Activated CD4-positive, alpha-beta T cell treated with anti-CD3 and anti-CD28 coated beads, Interleukin-2, amount 10 ng/mL, durations not matched to agents 24 days and 14 days (primary cell): ENCODE measurements at regions of chr2 and their contacts with region 1.

Region 1: GRCh38 chr2:48313036-48313877 is 216.7 kb upstream of the STON1 start:
- DNase-seq: peak; percentile 70
- H3K4me3 Mint-ChIP-seq: peak overlapping the region; percentile 92
- H3K27ac Mint-ChIP-seq: peak overlapping the region; percentile 99
- H3K4me1 Mint-ChIP-seq: peaks cover 24% of the 10 kb centered on the region
- H3K27me3 Mint-ChIP-seq: no peaks in the 10 kb centered on the region

Region 2: DNA sequence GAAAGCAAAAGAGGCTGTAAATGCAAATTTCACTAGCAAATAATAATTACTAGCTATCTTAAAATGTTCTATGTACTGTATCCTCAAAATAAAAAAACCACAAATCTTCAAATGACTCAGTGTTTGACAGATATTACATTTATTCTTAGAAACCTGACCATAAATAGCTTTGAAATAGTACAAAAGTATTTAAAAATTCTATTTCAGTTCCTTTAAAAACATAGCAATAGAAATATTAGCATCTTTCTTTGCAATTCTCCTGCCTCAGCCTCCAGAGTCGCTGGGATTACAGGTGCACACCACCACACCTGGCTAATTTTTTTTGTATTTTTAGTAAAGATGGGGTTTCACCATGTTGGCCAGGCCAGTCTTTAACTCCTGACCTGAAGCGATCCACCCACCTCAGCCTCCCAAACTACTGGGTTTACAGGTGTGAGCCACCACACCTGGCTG is 479.7 kb before region 1 on chr2:
- intact Hi-C with region 1: no loop called
- DNase-seq: no peak
- H3K4me3 Mint-ChIP-seq: no peak overlapping the region
- H3K27ac Mint-ChIP-seq: no peak overlapping the region
- H3K4me1 Mint-ChIP-seq: peaks cover 3% of the 10 kb centered on the region
- H3K27me3 Mint-ChIP-seq: no peaks in the 10 kb centered on the region

Region 3: DNA sequence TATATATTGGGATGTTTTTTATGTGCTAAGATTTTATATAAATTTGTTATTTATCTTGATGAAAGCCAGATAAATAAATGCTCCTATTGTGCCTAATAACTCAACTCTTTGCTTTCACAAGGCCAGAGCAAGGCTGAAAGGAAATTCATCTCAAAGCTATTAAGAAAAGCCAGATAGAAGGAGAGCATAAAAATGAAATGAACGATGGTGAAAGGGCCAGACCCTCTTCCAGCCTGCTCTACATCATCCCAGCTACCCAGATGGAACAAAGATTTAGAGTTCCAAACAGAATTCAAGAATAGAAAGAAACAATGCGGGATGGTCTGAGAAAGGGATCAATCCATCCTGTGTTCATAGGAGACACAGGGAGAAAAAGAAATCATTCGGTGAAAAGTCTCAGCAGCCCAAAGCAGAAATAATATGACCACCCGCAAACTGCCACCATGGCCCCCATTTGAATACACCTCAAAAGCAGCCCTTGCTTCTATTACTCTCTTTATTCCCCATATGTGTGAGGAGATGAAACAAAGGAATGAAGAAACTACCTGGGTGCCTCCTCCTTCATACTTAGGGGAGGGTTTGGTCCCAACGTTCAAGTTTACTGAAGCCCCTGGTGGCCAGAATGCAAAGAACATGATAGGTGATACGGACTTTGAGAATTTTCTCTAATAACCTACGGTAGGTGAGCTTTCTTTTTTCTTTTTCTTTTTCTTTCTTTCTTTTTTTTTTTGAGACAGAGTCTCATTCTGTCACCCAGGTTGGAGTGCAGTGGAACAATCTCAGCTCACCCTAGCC is 296.8 kb before region 1 on chr2:
- intact Hi-C with region 1: no loop called
- DNase-seq: no peak
- H3K4me3 Mint-ChIP-seq: no peak overlapping the region
- H3K27ac Mint-ChIP-seq: no peak overlapping the region
- H3K4me1 Mint-ChIP-seq: no peaks in the 10 kb centered on the region
- H3K27me3 Mint-ChIP-seq: peaks cover 4% of the 10 kb centered on the region

Region 4: GRCh38 chr2:48248241-48248933 is 64.9 kb before region 1 on chr2:
- intact Hi-C with region 1: loop called (anchors 1 kb)
- DNase-seq: no peak
- H3K4me3 Mint-ChIP-seq: no peak overlapping the region
- H3K27ac Mint-ChIP-seq: no peak overlapping the region
- H3K4me1 Mint-ChIP-seq: peaks cover 9% of the 10 kb centered on the region
- H3K27me3 Mint-ChIP-seq: peaks cover 5% of the 10 kb centered on the region

Region 5: GRCh38 chr2:48279344-48280090 is 33.7 kb before region 1 on chr2:
- intact Hi-C with region 1: no loop called
- DNase-seq: no peak
- H3K4me3 Mint-ChIP-seq: no peak overlapping the region
- H3K27ac Mint-ChIP-seq: no peak overlapping the region
- H3K4me1 Mint-ChIP-seq: peaks cover 3% of the 10 kb centered on the region
- H3K27me3 Mint-ChIP-seq: no peaks in the 10 kb centered on the region

Region 6: GRCh38 chr2:48356701-48357325 is 43.6 kb after region 1 on chr2:
- intact Hi-C with region 1: loop called (anchors 1 kb)
- DNase-seq: peak; percentile 85
- H3K4me3 Mint-ChIP-seq: peak overlapping the region; percentile 75
- H3K27ac Mint-ChIP-seq: peak overlapping the region; percentile 94
- H3K4me1 Mint-ChIP-seq: peaks cover 48% of the 10 kb centered on the region
- H3K27me3 Mint-ChIP-seq: no peaks in the 10 kb centered on the region

Region 7: GRCh38 chr2:48395658-48396057 is 82.4 kb after region 1 on chr2:
- intact Hi-C with region 1: no loop called
- DNase-seq: peak; percentile 71
- H3K4me3 Mint-ChIP-seq: peak overlapping the region; percentile 17
- H3K27ac Mint-ChIP-seq: peak overlapping the region; percentile 31
- H3K4me1 Mint-ChIP-seq: peaks cover 9% of the 10 kb centered on the region
- H3K27me3 Mint-ChIP-seq: peaks cover 3% of the 10 kb centered on the region